Activated naive CD4-positive, alpha-beta T cell treated with anti-CD3 and anti-CD28 coated beads for 36 hours (primary cell): ENCODE measurements at regions of chr2 and their contacts with region 1.

Region 1: GRCh38 chr2:178530625-178531142 is 50.4 kb downstream of the PLEKHA3 start:
- DNase-seq: peak; percentile 66
- H3K4me3 Mint-ChIP-seq: no peak overlapping the region
- H3K27ac Mint-ChIP-seq: peak overlapping the region; percentile 15
- H3K4me1 Mint-ChIP-seq: peaks cover 46% of the 10 kb centered on the region
- H3K27me3 Mint-ChIP-seq: no peaks in the 10 kb centered on the region

Region 2: DNA sequence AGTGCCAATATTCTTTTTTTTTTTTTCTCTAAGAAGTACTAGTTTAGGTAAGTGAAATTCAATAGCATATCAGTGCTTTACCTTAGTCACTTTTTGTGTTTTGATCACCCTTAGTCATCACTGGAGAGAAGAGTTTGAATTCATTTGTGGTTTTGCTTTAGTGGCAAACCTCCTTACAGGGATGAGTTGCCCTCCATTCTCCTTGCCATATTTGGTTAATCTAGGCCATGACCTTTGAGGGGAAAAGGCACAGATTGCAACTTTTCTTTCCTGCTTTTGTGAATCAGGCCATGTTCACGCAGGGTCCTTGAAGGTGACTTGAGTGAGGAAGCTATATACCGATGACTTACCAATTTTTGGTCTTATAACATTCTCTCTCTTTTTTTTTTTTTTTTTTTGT is 16.0 kb before region 1 on chr2:
- CTCF ChIA-PET with region 1: no interaction called
- intact Hi-C with region 1: loop called (anchors 1 kb)
- DNase-seq: peak; percentile 69
- H3K4me3 Mint-ChIP-seq: no peak overlapping the region
- H3K27ac Mint-ChIP-seq: peak overlapping the region; percentile 65
- H3K4me1 Mint-ChIP-seq: peaks cover 25% of the 10 kb centered on the region
- H3K27me3 Mint-ChIP-seq: no peaks in the 10 kb centered on the region

Region 3: GRCh38 chr2:178568227-178568626 is 37.5 kb after region 1 on chr2:
- CTCF ChIA-PET with region 1: no interaction called
- intact Hi-C with region 1: no loop called
- DNase-seq: no peak
- H3K4me3 Mint-ChIP-seq: no peak overlapping the region
- H3K27ac Mint-ChIP-seq: no peak overlapping the region
- H3K4me1 Mint-ChIP-seq: no peaks in the 10 kb centered on the region
- H3K27me3 Mint-ChIP-seq: no peaks in the 10 kb centered on the region